Ascending aorta (tissue), 2 donors: ENCODE measurements at regions of chr6 and their contacts with region 1.

Region 1: GRCh38 chr6:33248925-33249731 is 22.5 kb downstream of the VPS52 start:
- DNase-seq: peak; percentile 97 to 99
- H3K4me3 ChIP-seq: peak overlapping the region; percentile 69
- H3K27ac ChIP-seq: peak overlapping the region; percentile 93 to 94
- H3K4me1 ChIP-seq: peaks cover 4 to 23% of the 10 kb centered on the region in 2 donors
- H3K27me3 ChIP-seq: no peaks in the 10 kb centered on the region
- CTCF ChIP-seq: no peak

Region 2: DNA sequence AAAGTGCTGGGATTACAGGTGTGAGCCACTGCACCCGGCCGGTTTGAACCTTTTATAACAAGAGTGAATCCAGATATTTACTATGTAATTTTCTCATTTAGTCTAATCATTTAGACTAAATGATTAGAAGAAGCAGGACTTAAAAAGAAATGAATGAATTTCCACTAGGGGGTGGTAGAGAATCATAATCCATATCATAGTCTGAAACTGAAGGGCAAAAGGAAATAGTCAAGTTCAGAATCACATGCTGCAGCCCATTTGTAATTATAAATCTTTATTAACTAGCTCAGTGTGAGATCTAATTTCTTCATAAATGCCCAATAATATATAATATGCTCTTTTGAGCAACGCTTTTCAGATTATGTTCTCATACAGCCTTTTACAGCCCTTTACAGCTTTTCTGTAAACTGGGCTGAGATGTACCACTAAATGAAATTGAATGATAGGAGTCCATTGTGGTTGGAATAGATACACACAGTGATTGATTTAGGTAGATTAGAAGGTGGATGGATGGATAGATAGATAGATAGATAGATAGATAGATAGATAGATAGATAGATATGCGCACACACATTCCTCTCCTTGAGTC is 363.3 kb before region 1 on chr6:
- intact Hi-C with region 1: loop called (anchors 5 kb)
- DNase-seq: no peak
- H3K4me3 ChIP-seq: no peak overlapping the region
- H3K27ac ChIP-seq: no peak overlapping the region
- H3K4me1 ChIP-seq: peaks cover 0 to 2% of the 10 kb centered on the region in 2 donors
- H3K27me3 ChIP-seq: no peaks in the 10 kb centered on the region
- CTCF ChIP-seq: peak; percentile 56 to 64 (median 63)

Region 3: GRCh38 chr6:33118525-33119123 is 130.5 kb before region 1 on chr6:
- intact Hi-C with region 1: loop called (anchors 1 kb)
- DNase-seq: no peak
- H3K4me3 ChIP-seq: no peak overlapping the region
- H3K27ac ChIP-seq: no peak overlapping the region
- H3K4me1 ChIP-seq: peaks cover 0 to 2% of the 10 kb centered on the region in 2 donors
- H3K27me3 ChIP-seq: no peaks in the 10 kb centered on the region
- CTCF ChIP-seq: peak; percentile 76 to 83 (median 79)

Region 4: GRCh38 chr6:33200219-33201146 is 48.6 kb before region 1 on chr6 and contains the starts of genes RXRB and SLC39A7:
- intact Hi-C with region 1: loop called (anchors 1 kb)
- DNase-seq: peak; percentile 99 to 100
- H3K4me3 ChIP-seq: peak within 1 kb of the TSS; percentile 90 to 91
- H3K27ac ChIP-seq: peak within 1 kb of the TSS; percentile 95 to 97
- H3K4me1 ChIP-seq: peaks cover 16 to 32% of the 10 kb centered on the region in 2 donors
- H3K27me3 ChIP-seq: no peaks in the 10 kb centered on the region
- CTCF ChIP-seq: no peak
- total RNA-seq, gene RXRB: 21.6 TPM
- total RNA-seq, gene SLC39A7: 59.7 TPM

Region 5: GRCh38 chr6:33271458-33272274 is 22.5 kb after region 1 on chr6 and contains the starts of genes RPS18 and VPS52:
- intact Hi-C with region 1: loop called (anchors 1 kb)
- DNase-seq: peak; percentile 81 to 98
- H3K4me3 ChIP-seq: peak within 1 kb of the TSS; percentile 71 to 94
- H3K27ac ChIP-seq: peak within 1 kb of the TSS; percentile 91 to 96
- H3K4me1 ChIP-seq: peaks cover 9 to 42% of the 10 kb centered on the region in 2 donors
- H3K27me3 ChIP-seq: no peaks in the 10 kb centered on the region
- CTCF ChIP-seq: no peak
- total RNA-seq, gene RPS18: 1,863 TPM
- total RNA-seq, gene VPS52: 50.1 TPM

Region 6: GRCh38 chr6:33477864-33478263 is 228.7 kb after region 1 on chr6:
- intact Hi-C with region 1: no loop called
- DNase-seq: no peak
- H3K4me3 ChIP-seq: no peak overlapping the region
- H3K27ac ChIP-seq: no peak overlapping the region
- H3K4me1 ChIP-seq: no peaks in the 10 kb centered on the region
- H3K27me3 ChIP-seq: no peaks in the 10 kb centered on the region
- CTCF ChIP-seq: no peak